Posterior vena cava (tissue), 2 donors: ENCODE measurements at regions of chr2 and their contacts with region 1.

Region 1: DNA sequence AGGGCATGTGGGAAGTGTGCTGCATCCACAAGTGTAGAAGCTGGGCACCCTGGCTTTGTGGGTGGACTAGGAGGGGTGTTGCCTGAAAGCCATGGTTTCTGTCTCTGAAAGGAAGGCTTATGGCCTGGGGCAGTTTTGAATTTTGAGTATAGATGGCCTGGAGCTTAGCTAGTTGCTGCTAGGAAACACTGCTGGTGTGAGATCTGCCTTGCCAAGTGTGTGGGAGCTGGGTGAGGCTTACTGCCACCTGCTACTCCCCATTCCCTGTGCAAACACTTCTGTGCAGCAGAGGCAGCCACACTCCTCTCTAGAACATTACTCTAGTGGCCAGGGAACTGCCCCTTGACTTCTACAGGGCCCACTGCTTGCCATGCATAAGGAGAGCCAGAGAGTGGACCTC is 831.7 kb upstream of the LRRTM1 start:
- DNase-seq: no peak

Region 2: GRCh38 chr2:79887747-79888374 is 1248.4 kb before region 1 on chr2:
- intact Hi-C with region 1: no loop called
- DNase-seq: no peak

Region 3: DNA sequence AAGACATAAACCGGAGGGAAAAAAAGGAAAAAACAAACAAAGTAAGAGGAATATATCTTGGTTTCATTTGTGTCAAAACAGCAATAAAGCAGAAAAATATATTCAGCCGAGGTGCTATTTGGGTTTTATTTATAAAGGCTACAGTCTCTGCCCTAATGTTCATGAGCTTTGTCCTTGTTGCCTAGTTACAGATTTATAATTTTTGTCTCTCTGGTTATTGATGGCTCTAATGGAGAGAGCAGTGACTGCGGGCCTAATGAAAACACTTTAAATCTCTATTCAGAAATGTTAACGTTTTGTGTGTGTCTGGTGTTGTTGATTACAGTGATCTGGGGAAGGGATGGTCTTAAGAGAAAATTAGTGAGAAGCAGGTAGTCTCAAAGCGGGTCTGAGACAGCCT is 22.2 kb after region 1 on chr2:
- intact Hi-C with region 1: loop called in 1 of 2 experiments (anchors 1 kb)
- DNase-seq: no peak